ENCODE measurements at regions of chr7 and their contacts with region 1.

Region 1: GRCh38 chr7:118104812-118105441 is 79.0 kb upstream of the LSM8 start:
- DNase-seq: peak; percentile 54
- ATAC-seq: peak; percentile 77
- H3K4me3 ChIP-seq: no peak overlapping the region
- H3K27ac ChIP-seq: no peak overlapping the region
- H3K4me1 ChIP-seq: peaks cover 5% of the 10 kb centered on the region; the same call in 1 of the 2 replicates
- H3K27me3 ChIP-seq: no peaks in the 10 kb centered on the region
- CTCF ChIP-seq: peak; percentile 70

Region 2: DNA sequence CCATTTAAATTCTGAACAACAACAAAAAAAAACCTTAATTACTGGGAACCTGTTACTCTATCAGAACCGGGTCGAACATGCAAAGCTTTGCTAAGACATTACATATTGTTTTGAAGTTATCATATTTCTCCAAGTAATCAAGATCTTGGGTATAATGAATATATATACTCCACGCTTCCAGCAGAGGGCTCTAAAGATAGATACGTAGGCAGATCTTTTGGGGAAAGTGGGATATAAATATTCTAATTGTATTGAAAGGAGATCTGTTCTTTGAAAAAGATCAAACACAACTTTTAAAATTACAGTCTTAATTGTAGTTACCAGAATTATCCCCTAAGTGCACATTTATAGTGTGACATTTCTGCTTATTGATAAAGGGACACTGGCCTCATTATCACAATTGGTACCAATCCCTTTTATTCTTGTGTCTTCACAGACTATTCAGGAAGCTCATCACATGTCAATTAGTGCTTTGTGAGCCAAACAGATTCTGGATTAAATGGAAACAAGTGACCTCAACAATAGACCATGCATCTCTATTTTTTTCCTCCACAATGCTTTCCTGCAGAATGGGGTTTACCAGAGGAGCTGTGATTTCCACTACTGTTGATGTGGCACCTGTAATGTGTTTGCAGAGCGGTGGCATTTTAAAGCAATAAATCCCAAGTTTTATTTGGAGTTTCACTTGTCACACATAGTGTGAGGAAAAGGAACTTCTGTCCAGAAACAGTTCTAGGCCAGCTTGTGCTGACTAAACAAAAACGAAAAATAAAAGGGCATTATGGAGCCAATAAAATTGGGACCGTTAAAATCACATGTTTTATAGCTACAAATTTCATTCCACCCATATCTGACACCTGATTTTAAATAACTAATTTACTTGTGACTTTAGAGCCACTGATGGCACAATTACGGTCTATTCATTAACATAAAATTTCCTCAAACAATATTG is 354.0 kb before region 1 on chr7:
- CTCF ChIA-PET with region 1: no interaction called
- POLR2A ChIA-PET with region 1: no interaction called
- intact Hi-C with region 1: loop called (anchors 1 kb)
- DNase-seq: peak; percentile 48
- ATAC-seq: peak; percentile 24; the same call in 1 of the 2 replicates
- H3K4me3 ChIP-seq: no peak overlapping the region
- H3K27ac ChIP-seq: no peak overlapping the region
- H3K4me1 ChIP-seq: no peaks in the 10 kb centered on the region; the same call in 1 of the 2 replicates
- H3K27me3 ChIP-seq: no peaks in the 10 kb centered on the region
- CTCF ChIP-seq: peak; percentile 71

Region 3: DNA sequence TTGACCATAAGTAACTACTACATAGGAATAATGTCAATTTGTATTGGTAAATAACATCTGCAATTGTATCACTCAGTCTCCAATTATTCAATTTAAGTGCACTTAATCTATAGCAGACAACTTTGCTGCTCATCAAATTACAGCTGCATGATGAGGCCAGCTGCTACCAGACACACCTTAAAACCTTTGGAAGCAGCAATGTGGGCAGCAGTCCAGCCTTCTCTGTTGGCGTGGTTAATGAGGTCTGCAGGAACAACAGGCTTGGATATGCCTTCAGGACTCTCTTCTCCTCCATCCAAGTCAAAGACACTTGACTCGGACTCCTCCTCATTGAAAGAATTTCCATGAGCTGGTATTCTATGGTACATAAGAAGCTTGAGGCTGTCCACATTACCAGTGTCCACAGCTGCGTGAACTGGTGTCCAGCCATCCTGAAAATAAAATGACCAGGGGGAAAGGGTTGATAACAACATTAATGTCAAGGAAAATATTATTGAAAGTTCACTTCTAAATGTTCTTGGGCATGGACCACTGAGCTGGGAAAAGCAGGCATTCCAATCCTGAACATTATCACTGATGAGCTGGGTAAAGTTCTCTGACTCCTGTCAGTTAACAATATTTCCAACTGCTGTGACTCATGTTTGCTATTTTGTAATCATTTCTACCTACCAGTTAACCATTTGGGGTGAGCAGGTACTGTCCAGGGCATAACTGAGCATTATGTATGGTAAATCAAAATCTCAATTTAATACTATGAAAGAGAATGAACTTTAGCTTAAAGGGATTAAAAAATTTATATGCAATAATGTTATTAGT is 327.4 kb before region 1 on chr7:
- CTCF ChIA-PET with region 1: interaction called, 13 read pairs
- POLR2A ChIA-PET with region 1: no interaction called
- intact Hi-C with region 1: no loop called
- DNase-seq: peak; percentile 31
- ATAC-seq: peak; percentile 63
- H3K4me3 ChIP-seq: no peak overlapping the region
- H3K27ac ChIP-seq: no peak overlapping the region
- H3K4me1 ChIP-seq: peaks cover 5% of the 10 kb centered on the region
- H3K27me3 ChIP-seq: no peaks in the 10 kb centered on the region
- CTCF ChIP-seq: no peak

Region 4: DNA sequence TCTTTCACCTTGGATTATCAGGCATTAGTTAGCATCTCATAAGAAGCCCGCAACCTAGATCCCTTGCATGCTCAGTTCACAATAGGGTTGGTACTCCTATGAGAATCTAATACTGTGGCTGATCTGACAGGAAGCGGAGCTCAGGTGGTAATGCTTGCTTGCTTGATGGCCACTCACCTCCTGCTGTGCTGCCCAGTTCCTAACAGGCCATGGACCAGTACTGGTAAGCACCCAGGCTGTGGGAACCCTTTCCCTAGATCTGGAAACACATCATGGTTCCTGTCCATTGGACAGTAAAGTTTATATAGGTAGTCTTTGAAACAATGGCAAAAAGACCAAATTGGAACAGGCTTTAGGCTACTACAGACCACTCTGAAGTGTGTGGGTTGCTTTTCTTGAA is 222.3 kb before region 1 on chr7:
- CTCF ChIA-PET with region 1: no interaction called
- POLR2A ChIA-PET with region 1: no interaction called
- intact Hi-C with region 1: no loop called
- DNase-seq: no peak
- ATAC-seq: no peak
- H3K4me3 ChIP-seq: no peak overlapping the region
- H3K27ac ChIP-seq: no peak overlapping the region
- H3K4me1 ChIP-seq: no peaks in the 10 kb centered on the region
- H3K27me3 ChIP-seq: no peaks in the 10 kb centered on the region
- CTCF ChIP-seq: no peak

Region 5: GRCh38 chr7:117993377-117994003 is 111.4 kb before region 1 on chr7:
- CTCF ChIA-PET with region 1: no interaction called
- POLR2A ChIA-PET with region 1: no interaction called
- intact Hi-C with region 1: loop called (anchors 2 kb)
- DNase-seq: peak; percentile 65
- ATAC-seq: peak; percentile 48
- H3K4me3 ChIP-seq: no peak overlapping the region
- H3K27ac ChIP-seq: no peak overlapping the region
- H3K4me1 ChIP-seq: peaks cover 27% of the 10 kb centered on the region
- H3K27me3 ChIP-seq: no peaks in the 10 kb centered on the region
- CTCF ChIP-seq: peak; percentile 65; the same call in 1 of the 2 replicates

Region 6: GRCh38 chr7:118040562-118040961 is 64.4 kb before region 1 on chr7:
- CTCF ChIA-PET with region 1: no interaction called
- POLR2A ChIA-PET with region 1: no interaction called
- intact Hi-C with region 1: no loop called
- DNase-seq: no peak
- ATAC-seq: no peak
- H3K4me3 ChIP-seq: no peak overlapping the region
- H3K27ac ChIP-seq: no peak overlapping the region
- H3K4me1 ChIP-seq: no peaks in the 10 kb centered on the region
- H3K27me3 ChIP-seq: no peaks in the 10 kb centered on the region
- CTCF ChIP-seq: no peak

Region 7: GRCh38 chr7:118195837-118196474 is 91.0 kb after region 1 on chr7:
- CTCF ChIA-PET with region 1: no interaction called
- POLR2A ChIA-PET with region 1: no interaction called
- intact Hi-C with region 1: loop called (anchors 5 kb)
- DNase-seq: peak; percentile 77
- ATAC-seq: peak; percentile 83
- H3K4me3 ChIP-seq: no peak overlapping the region
- H3K27ac ChIP-seq: no peak overlapping the region
- H3K4me1 ChIP-seq: no peaks in the 10 kb centered on the region
- H3K27me3 ChIP-seq: no peaks in the 10 kb centered on the region
- CTCF ChIP-seq: peak; percentile 83

Region 8: GRCh38 chr7:118264836-118265235 is 159.9 kb after region 1 on chr7:
- CTCF ChIA-PET with region 1: no interaction called
- POLR2A ChIA-PET with region 1: no interaction called
- intact Hi-C with region 1: no loop called
- DNase-seq: no peak
- ATAC-seq: no peak
- H3K4me3 ChIP-seq: no peak overlapping the region
- H3K27ac ChIP-seq: no peak overlapping the region
- H3K4me1 ChIP-seq: no peaks in the 10 kb centered on the region
- H3K27me3 ChIP-seq: no peaks in the 10 kb centered on the region
- CTCF ChIP-seq: no peak